Activated CD8-positive, alpha-beta memory T cell treated with anti-CD3 and anti-CD28 coated beads, Interleukin-2, amount 10 ng/mL, durations not matched to agents 7 days and 5 days (primary cell): ENCODE measurements at regions of chr5 and their contacts with region 1.

Region 1: DNA sequence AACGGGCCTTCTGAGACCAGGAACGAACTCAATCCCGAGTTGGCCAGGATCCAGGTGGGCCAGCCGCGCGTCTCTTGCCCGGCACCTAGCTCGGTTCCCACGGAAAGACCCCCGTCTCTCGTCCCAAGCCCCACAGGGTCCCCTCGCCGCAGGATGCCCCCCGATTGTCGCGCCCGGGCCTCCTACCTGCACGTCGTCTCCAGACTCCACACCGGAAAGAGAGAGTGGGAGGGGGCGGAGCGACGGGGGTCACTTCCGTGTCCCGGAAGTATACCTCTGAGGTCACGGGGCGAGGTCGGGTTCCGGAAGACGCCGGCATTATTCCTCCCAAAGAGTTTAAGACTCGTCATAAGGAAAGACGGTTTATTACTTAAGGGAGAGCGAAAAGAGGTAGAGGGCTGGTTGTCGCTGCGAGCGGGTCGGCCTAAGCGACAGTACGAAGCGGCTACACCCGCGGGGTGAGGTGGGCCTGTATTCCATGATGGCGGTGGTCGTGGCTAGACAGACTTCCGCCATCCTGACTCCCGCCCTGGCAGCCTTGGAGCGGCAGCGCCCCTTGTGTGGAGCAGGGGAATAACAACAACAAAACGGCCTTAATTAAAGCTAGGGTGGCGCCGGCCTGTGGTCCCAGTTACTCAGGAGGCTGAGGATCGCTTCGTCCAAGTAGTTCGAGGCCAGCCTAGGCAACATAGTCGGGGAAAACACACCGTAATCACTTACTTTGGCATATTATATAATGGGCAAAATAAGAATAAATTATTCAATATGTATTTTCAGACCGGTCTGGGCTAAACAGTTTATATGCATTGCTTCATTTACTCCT is at the start of gene RPS14:
- DNase-seq: peak; percentile 97
- ATAC-seq: peak; percentile 94
- H3K4me3 Mint-ChIP-seq: peak within 1 kb of the TSS; percentile 96
- H3K27ac Mint-ChIP-seq: peak within 1 kb of the TSS; percentile 99
- H3K4me1 Mint-ChIP-seq: peaks cover 34% of the 10 kb centered on the region
- H3K27me3 Mint-ChIP-seq: no peaks in the 10 kb centered on the region
- total RNA-seq, gene RPS14: 1,980 to 2,218 TPM

Region 2: DNA sequence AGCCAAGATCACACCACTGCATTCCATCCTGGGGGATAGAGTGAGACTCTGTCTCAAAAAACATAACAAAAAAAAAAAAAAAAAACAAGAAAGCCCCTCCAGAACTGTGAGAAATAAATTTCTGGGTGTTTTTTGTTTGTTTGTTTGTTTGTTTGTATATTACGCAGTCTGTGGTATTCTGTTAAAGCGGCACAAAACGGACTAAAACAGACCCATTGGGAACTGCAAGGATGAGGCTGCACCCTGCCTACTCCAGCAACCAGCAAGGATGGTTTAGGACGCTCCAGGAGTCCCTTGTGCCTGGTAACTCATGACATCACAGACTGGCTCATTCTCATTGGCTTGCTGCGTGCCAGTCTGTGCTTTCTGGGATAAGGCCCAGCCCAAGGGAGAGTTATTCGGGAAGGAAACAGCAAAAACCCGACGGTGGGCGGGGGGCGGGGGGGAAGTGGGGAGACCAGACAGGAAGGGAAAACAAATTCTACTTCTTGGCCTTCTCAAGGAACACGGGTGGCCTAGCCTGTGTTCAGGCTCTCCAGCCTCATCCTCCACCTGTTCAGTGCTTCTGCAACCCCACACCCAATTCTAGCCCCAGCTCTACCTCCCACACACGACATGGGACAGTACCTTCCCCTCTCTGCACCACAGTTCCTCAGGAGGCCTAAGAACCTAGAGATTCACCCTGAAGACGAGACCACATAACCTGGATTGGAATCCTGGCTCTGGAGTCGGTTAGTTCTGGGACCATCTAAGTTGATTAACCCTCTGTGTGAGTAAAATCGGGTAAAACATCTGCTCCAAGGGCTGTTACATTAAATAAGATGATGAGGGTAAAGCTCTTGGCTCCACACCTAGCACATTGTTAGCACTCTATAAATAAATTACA is 39.8 kb before region 1 on chr5:
- CTCF ChIA-PET with region 1: interaction called, 20 read pairs
- DNase-seq: peak; percentile 84
- ATAC-seq: peak; percentile 25
- H3K4me3 Mint-ChIP-seq: peak overlapping the region; percentile 98
- H3K27ac Mint-ChIP-seq: peak overlapping the region; percentile 99
- H3K4me1 Mint-ChIP-seq: peaks cover 39% of the 10 kb centered on the region
- H3K27me3 Mint-ChIP-seq: no peaks in the 10 kb centered on the region

Region 3: DNA sequence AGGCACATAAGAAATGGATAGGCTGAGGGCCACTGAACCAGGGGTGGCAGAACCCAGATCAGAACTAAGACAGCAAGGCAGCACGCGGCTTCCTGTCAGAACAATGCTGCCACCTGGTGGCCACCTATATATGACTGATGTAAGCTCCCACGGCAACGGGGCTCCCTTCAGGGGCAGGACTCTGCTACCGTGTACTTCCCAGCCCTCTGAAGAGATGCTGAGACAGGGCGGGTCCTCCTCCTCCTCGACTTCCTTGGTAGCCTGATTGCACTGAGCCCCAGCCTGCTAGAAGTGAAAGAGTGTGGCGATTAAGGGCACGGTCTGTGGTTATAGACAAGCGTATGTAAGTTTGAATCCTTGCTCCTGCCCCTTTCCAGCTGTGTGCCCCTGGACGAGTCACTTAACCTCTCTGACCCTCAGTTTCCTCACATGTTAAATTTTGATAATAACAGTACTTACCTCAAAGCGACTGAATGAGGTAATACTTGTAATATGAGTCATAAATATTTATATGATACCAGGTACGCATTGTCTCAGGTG is 13.5 kb before region 1 on chr5:
- CTCF ChIA-PET with region 1: interaction called, 13 read pairs
- DNase-seq: peak; percentile 95
- ATAC-seq: peak; percentile 98
- H3K4me3 Mint-ChIP-seq: peak overlapping the region; percentile 38
- H3K27ac Mint-ChIP-seq: peak overlapping the region; percentile 84
- H3K4me1 Mint-ChIP-seq: peaks cover 13% of the 10 kb centered on the region
- H3K27me3 Mint-ChIP-seq: no peaks in the 10 kb centered on the region

Region 4: GRCh38 chr5:150473673-150474358 is 24.1 kb after region 1 on chr5:
- CTCF ChIA-PET with region 1: no interaction called
- DNase-seq: no peak
- ATAC-seq: no peak
- H3K4me3 Mint-ChIP-seq: no peak overlapping the region
- H3K27ac Mint-ChIP-seq: no peak overlapping the region
- H3K4me1 Mint-ChIP-seq: peaks cover 4% of the 10 kb centered on the region
- H3K27me3 Mint-ChIP-seq: peaks cover 3% of the 10 kb centered on the region